ENCODE measurements at regions of chr2 and their contacts with region 1.

Region 1: DNA sequence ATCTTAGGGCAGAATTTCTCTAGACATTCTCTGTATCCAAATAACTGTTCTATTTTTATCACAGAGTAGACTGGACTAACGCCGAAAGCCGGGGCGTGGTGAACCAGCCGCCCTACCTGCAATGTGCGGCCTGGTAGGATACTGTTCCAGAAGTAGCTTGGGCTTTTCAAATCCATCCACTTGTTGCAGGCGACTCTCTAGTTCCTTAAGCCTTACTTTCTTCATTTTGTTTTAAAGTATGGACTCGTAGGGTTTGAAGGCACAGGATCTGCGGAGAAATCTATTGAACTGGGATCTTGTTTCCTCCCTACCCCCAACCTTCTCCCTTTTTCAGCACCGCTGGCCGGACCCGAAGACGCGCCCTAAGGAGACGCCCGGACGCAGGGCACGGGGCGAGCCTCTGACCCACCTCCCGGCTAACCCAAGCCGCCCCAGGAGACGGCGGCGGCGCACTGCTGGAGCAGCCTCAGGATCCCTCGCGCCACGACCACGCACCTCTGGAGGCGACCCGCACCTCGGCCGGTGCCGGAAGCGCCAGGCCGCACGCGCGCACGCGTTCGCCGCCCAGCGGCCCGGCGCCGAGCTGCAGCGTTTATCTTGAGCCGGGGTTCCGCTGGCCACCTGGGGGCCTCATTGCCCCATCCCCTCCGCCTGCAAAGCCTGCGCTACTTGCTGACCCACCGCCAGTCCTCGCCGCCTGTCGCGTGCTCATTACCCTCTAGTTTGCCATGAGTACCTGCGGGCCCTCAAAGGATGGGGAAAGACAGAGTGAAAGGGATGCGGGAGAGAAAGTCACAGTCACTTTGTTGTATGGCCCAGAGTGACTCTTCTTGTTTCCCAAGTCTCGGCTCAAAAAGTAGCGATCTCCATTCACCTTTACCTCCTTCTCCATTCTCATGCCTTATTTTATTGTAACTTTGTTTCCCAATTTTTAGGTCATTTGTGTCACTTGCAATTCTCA is at the start of gene METTL5:
- DNase-seq: peak; percentile 55 to 87 (median 73)
- ATAC-seq: peak; percentile 61
- H3K4me3 ChIP-seq: peak within 1 kb of the TSS; percentile 87
- H3K4me3 Mint-ChIP-seq: peak within 1 kb of the TSS; percentile 95
- H3K27ac ChIP-seq: peak within 1 kb of the TSS; percentile 59 to 72
- H3K27ac Mint-ChIP-seq: peak within 1 kb of the TSS; percentile 92
- H3K4me1 ChIP-seq: peaks cover 37% of the 10 kb centered on the region
- H3K4me1 Mint-ChIP-seq: peaks cover 61% of the 10 kb centered on the region
- H3K27me3 ChIP-seq: no peaks in the 10 kb centered on the region
- H3K27me3 Mint-ChIP-seq: no peaks in the 10 kb centered on the region
- CTCF ChIP-seq: peak; percentile 93
- total RNA-seq, gene METTL5: 13.7 to 15.8 TPM

Region 2: GRCh38 chr2:168323529-168324021 is 1501.1 kb before region 1 on chr2:
- CTCF ChIA-PET with region 1: no interaction called
- POLR2A ChIA-PET with region 1: no interaction called
- intact Hi-C with region 1: no loop called
- DNase-seq: no peak
- ATAC-seq: no peak
- H3K4me3 ChIP-seq: no peak overlapping the region
- H3K4me3 Mint-ChIP-seq: no peak overlapping the region
- H3K27ac ChIP-seq: no peak overlapping the region
- H3K27ac Mint-ChIP-seq: no peak overlapping the region
- H3K4me1 ChIP-seq: no peaks in the 10 kb centered on the region
- H3K4me1 Mint-ChIP-seq: no peaks in the 10 kb centered on the region
- H3K27me3 ChIP-seq: no peaks in the 10 kb centered on the region
- H3K27me3 Mint-ChIP-seq: peaks cover 22% of the 10 kb centered on the region
- CTCF ChIP-seq: no peak

Region 3: DNA sequence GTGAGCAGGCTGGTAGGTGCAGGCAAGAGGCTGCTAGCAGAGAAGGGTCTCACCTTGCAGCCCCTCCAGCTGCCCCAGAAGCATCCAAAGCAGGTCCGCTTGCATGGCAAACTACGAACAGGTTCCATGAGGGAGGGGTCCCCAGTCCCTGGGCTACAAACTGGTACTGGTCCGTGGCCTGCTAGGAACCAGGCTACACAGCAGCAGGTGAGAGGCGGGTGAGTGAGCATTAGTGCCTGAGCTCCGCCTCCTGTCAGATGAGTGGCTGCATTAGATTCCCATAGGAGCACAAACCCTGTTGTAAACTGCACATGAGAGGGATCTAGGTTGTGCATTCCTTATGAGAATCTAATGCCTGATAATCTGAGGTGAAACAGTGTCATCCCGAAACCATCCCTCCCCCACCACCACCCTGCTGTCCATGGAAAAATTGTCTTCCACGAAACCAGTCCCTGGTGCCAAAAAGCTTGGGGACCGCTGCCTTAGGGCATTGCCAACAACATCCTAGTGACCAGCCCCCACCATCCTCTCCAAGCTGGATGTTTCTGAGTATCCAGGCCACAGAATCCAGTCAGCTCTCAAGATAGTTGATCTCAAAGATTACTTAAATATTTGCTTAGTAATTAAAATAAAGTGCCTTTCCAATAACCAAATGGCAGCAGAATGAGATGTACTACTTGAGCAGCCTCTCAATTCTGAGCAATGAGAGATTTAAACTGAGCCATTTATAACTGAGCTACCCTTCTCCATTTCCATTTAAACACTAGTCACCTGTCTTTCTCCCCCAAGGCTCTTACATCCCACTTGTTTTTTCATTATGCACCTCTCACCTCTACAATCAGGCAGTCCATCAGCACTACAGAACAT is 494.7 kb before region 1 on chr2:
- CTCF ChIA-PET with region 1: no interaction called
- POLR2A ChIA-PET with region 1: no interaction called
- intact Hi-C with region 1: no loop called
- DNase-seq: no peak
- ATAC-seq: no peak
- H3K4me3 ChIP-seq: no peak overlapping the region
- H3K4me3 Mint-ChIP-seq: no peak overlapping the region
- H3K27ac ChIP-seq: no peak overlapping the region
- H3K27ac Mint-ChIP-seq: no peak overlapping the region
- H3K4me1 ChIP-seq: no peaks in the 10 kb centered on the region
- H3K4me1 Mint-ChIP-seq: no peaks in the 10 kb centered on the region
- H3K27me3 ChIP-seq: peaks cover 0 to 5% of the 10 kb centered on the region in 2 experiments
- H3K27me3 Mint-ChIP-seq: peaks cover 23% of the 10 kb centered on the region
- CTCF ChIP-seq: no peak

Region 4: GRCh38 chr2:169798718-169799592 is 25.7 kb before region 1 on chr2 and contains the start of gene SSB:
- CTCF ChIA-PET with region 1: interaction called, 3 read pairs
- POLR2A ChIA-PET with region 1: interaction called, 15 read pairs
- intact Hi-C with region 1: loop called (anchors 1 to 2 kb)
- DNase-seq: peak; percentile 83 to 97 (median 93)
- ATAC-seq: peak; percentile 92
- H3K4me3 ChIP-seq: peak within 1 kb of the TSS; percentile 55 to 80
- H3K4me3 Mint-ChIP-seq: peak within 1 kb of the TSS; percentile 80
- H3K27ac ChIP-seq: peak within 1 kb of the TSS; percentile 86 to 89
- H3K27ac Mint-ChIP-seq: peak within 1 kb of the TSS; percentile 87
- H3K4me1 ChIP-seq: peaks cover 20% of the 10 kb centered on the region
- H3K4me1 Mint-ChIP-seq: peaks cover 29% of the 10 kb centered on the region
- H3K27me3 ChIP-seq: no peaks in the 10 kb centered on the region
- H3K27me3 Mint-ChIP-seq: no peaks in the 10 kb centered on the region
- CTCF ChIP-seq: no peak
- total RNA-seq, gene SSB: 150 to 170 TPM

Region 5: DNA sequence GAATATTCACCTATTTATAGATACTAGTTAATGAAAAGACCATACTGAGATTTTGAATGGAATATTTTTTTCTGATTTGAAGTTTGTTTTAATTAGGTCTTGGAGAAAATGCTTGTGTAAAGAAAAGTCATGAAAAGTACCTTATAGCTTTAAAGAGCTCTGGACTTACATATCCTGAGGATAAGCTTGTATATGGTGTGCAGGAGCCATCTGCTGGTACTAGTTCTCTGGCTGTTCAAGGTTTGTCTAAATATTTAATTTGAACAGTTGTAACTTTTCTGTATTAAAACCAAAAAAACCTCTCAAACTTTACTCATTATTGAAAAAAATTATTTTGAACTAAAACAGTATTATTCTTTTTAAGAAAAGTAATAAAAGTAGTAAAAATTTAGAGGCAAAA is 52.7 kb after region 1 on chr2:
- CTCF ChIA-PET with region 1: interaction called, 3 read pairs
- POLR2A ChIA-PET with region 1: no interaction called
- intact Hi-C with region 1: loop called in 1 of 2 experiments (anchors 2 kb)
- DNase-seq: peak in 3 of 9 experiments; percentile 21 to 28 (median 21)
- ATAC-seq: no peak
- H3K4me3 ChIP-seq: no peak overlapping the region
- H3K4me3 Mint-ChIP-seq: no peak overlapping the region
- H3K27ac ChIP-seq: no peak overlapping the region
- H3K27ac Mint-ChIP-seq: no peak overlapping the region
- H3K4me1 ChIP-seq: no peaks in the 10 kb centered on the region
- H3K4me1 Mint-ChIP-seq: no peaks in the 10 kb centered on the region
- H3K27me3 ChIP-seq: no peaks in the 10 kb centered on the region
- H3K27me3 Mint-ChIP-seq: no peaks in the 10 kb centered on the region
- CTCF ChIP-seq: peak; percentile 30

Region 6: DNA sequence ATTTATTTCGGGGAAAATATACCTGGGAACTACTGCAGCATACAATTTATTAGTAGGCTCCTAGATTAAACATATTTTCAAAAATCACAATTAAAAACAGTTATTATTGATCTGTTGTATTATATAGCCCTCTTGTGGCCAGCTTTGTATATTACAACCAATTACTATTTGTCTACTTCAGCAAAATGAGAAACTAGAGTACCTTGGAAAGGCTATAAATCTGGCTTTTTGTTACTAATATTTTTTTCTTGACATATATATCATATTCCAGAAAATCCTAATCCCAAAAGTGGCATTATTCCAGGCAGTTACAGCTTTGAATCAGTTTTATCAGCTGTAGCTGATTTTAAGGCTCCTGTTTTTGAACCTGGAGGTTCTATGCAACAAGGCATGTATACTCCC is 103.8 kb after region 1 on chr2:
- CTCF ChIA-PET with region 1: no interaction called
- POLR2A ChIA-PET with region 1: no interaction called
- intact Hi-C with region 1: loop called in 1 of 2 experiments (anchors 1 kb)
- DNase-seq: peak in 2 of 9 experiments; percentile 49 to 58
- ATAC-seq: peak; percentile 54
- H3K4me3 ChIP-seq: no peak overlapping the region
- H3K4me3 Mint-ChIP-seq: no peak overlapping the region
- H3K27ac ChIP-seq: no peak overlapping the region
- H3K27ac Mint-ChIP-seq: no peak overlapping the region
- H3K4me1 ChIP-seq: no peaks in the 10 kb centered on the region
- H3K4me1 Mint-ChIP-seq: no peaks in the 10 kb centered on the region
- H3K27me3 ChIP-seq: no peaks in the 10 kb centered on the region
- H3K27me3 Mint-ChIP-seq: no peaks in the 10 kb centered on the region
- CTCF ChIP-seq: peak; percentile 97

Measured in CD8-positive, alpha-beta T cell (primary cell).